ENCODE measurements at regions of chr1 and their contacts with region 1.

Region 1: GRCh38 chr1:234887016-234887900 is 241.4 kb downstream of the TOMM20 start:
- DNase-seq: peak; percentile 80
- ATAC-seq: peak; percentile 81

Region 2: GRCh38 chr1:234533975-234534876 is 353.0 kb before region 1 on chr1:
- intact Hi-C with region 1: loop called (anchors 5 kb)
- DNase-seq: peak; percentile 96
- ATAC-seq: peak; percentile 13

Region 3: DNA sequence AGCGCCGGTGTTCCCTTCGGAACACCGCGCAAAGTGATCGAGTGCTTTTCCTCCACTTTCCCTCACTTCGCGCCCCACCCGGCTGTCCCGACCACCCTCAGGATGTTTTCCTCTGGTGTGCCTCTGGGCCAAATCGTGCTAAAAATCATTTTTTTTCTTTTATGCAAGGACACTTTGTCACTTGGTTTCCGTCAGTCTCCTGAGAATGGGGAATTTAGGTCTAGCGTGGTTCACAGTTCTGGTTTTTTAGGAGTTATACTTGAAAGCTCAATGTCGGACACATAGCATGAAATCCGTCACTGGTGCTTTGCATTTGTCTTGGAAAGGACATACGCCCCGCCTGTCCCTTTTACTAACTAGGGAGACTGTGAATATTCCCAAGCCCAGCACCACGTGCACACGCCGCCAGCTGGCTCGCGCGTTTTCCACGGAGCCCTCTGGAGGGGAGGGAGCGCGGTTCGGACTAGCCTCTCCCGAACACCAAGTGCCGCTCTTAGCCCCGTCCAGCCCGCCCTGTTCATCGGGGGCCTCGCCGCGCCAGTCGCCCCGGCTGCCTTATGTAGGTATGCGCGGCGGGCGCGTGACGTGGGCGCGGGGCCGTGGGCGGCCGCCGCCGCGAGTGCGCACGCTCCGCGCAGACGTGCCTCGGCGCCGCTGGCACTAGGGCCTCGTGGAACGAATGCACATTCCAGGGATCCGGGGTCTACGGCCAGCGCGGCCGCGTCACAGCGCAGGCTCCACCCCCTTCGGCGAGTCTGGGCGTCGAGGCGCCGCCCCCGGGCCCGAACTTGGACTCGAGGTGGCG is 276.7 kb before region 1 on chr1:
- intact Hi-C with region 1: loop called (anchors 2 kb)
- DNase-seq: peak; percentile 98
- ATAC-seq: peak; percentile 76

Region 4: GRCh38 chr1:235060607-235061470 is 173.6 kb after region 1 on chr1:
- intact Hi-C with region 1: no loop called
- DNase-seq: no peak
- ATAC-seq: peak; percentile 61

Region 5: DNA sequence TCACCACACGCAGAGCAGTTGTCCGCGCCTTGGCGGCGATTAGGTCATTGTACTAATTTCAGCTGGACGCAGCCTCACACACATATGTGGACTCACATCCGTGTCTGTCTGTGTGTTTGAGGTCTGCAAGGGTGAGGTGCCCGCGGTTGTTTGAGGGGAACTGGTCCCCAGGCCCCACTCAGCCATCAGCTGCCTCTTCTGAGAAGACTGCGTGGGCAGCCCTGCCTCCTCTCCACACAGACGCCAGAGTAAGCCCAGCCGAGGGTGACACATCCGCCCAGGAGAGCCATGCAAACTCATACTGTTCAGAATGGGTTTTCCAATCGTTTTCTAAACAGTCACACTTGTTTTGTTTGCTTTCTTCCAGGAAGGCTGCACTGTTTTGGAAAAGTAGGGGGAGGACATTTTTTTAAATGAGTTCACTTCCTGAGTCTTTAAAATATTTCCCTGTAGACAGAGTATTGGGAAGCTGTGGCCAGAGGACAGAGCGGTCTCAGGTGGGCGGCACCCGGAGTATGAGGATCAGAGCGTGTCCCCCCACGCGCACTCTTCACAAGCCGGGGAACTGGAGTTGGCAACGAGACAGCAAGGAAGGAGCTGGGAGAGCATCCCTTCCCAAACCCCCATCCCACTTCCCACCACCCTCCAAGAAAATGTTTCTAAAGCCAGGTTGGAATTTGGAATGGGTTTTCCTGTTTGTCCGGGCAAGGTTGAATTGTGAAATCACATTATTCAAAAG is 188.1 kb after region 1 on chr1:
- intact Hi-C with region 1: loop called (anchors 5 kb)
- DNase-seq: peak; percentile 80
- ATAC-seq: peak; percentile 54

Measured in Right ventricle myocardium superior (tissue), 1 donor.